ENCODE measurements at regions of chr19 and their contacts with region 1.

Region 1: GRCh38 chr19:49766007-49766937 is 529 bp upstream of the AP2A1 start:
- DNase-seq: peak; percentile 96 to 100
- ATAC-seq: peak; percentile 87 to 97 (median 87)
- H3K4me3 ChIP-seq: peak overlapping the region; percentile 50
- H3K4me3 Mint-ChIP-seq: peak overlapping the region; percentile 95
- H3K27ac ChIP-seq: peak overlapping the region; percentile 71
- H3K27ac Mint-ChIP-seq: peak overlapping the region; percentile 91 to 93
- H3K4me1 ChIP-seq: peaks cover 58% of the 10 kb centered on the region
- H3K4me1 Mint-ChIP-seq: peaks cover 45 to 55% of the 10 kb centered on the region in 2 donors
- H3K27me3 ChIP-seq: no peaks in the 10 kb centered on the region
- H3K27me3 Mint-ChIP-seq: no peaks in the 10 kb centered on the region
- CTCF ChIP-seq: no peak

Region 2: DNA sequence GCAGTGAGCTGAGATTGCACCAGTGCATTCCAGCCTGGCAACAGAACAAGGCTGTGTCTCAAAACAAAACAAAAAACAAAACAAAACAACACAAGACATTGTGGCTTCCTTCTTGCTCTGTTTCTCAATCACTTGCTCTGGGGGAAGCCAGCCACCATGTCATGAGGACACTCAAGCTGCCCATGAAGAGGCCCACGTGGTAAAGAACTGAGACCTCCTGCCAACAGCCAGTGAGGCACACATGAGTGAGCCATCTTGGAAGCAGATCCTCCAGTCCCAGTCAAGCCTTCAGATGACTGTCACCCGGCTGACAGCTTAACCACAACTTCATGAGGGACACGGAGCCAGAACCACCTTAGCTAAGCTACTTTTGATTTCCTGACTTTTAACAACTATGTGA is 50.1 kb before region 1 on chr19:
- intact Hi-C with region 1: loop called (anchors 2 kb)
- DNase-seq: no peak
- ATAC-seq: no peak
- H3K4me3 ChIP-seq: no peak overlapping the region
- H3K4me3 Mint-ChIP-seq: no peak overlapping the region
- H3K27ac ChIP-seq: no peak overlapping the region
- H3K27ac Mint-ChIP-seq: no peak overlapping the region
- H3K4me1 ChIP-seq: peaks cover 16% of the 10 kb centered on the region
- H3K4me1 Mint-ChIP-seq: peaks cover 8 to 13% of the 10 kb centered on the region in 2 donors
- H3K27me3 ChIP-seq: no peaks in the 10 kb centered on the region
- H3K27me3 Mint-ChIP-seq: peaks cover 0 to 4% of the 10 kb centered on the region in 2 donors
- CTCF ChIP-seq: no peak

Region 3: GRCh38 chr19:49786376-49786820 is 20.1 kb after region 1 on chr19:
- intact Hi-C with region 1: no loop called
- DNase-seq: no peak
- ATAC-seq: no peak
- H3K4me3 ChIP-seq: no peak overlapping the region
- H3K4me3 Mint-ChIP-seq: no peak overlapping the region
- H3K27ac ChIP-seq: no peak overlapping the region
- H3K27ac Mint-ChIP-seq: peak overlapping the region; percentile 21 to 77
- H3K4me1 ChIP-seq: peaks cover 4% of the 10 kb centered on the region
- H3K4me1 Mint-ChIP-seq: peaks cover 37 to 41% of the 10 kb centered on the region in 2 donors
- H3K27me3 ChIP-seq: no peaks in the 10 kb centered on the region
- H3K27me3 Mint-ChIP-seq: no peaks in the 10 kb centered on the region
- CTCF ChIP-seq: no peak

Region 4: GRCh38 chr19:49817964-49818648 is 51.8 kb after region 1 on chr19 and contains the start of gene MED25:
- intact Hi-C with region 1: loop called (anchors 2 kb)
- DNase-seq: peak; percentile 91 to 95
- ATAC-seq: peak; percentile 52 to 74 (median 62)
- H3K4me3 ChIP-seq: peak within 1 kb of the TSS; percentile 98
- H3K4me3 Mint-ChIP-seq: peak within 1 kb of the TSS; percentile 98
- H3K27ac ChIP-seq: peak within 1 kb of the TSS; percentile 99
- H3K27ac Mint-ChIP-seq: peak within 1 kb of the TSS; percentile 98
- H3K4me1 ChIP-seq: peaks cover 24% of the 10 kb centered on the region
- H3K4me1 Mint-ChIP-seq: peaks cover 21 to 38% of the 10 kb centered on the region in 2 donors
- H3K27me3 ChIP-seq: no peaks in the 10 kb centered on the region
- H3K27me3 Mint-ChIP-seq: no peaks in the 10 kb centered on the region
- CTCF ChIP-seq: peak; percentile 14
- total RNA-seq, gene MED25: 64.2 to 132 (median 69.5) TPM

Region 5: GRCh38 chr19:49850473-49851342 is 84.4 kb after region 1 on chr19 and contains the start of gene PTOV1:
- intact Hi-C with region 1: loop called (anchors 1 kb)
- DNase-seq: peak; percentile 92 to 95
- ATAC-seq: peak; percentile 90 to 96 (median 91)
- H3K4me3 ChIP-seq: peak within 1 kb of the TSS; percentile 77
- H3K4me3 Mint-ChIP-seq: peak within 1 kb of the TSS; percentile 93
- H3K27ac ChIP-seq: peak within 1 kb of the TSS; percentile 94
- H3K27ac Mint-ChIP-seq: peak within 1 kb of the TSS; percentile 86 to 95
- H3K4me1 ChIP-seq: peaks cover 31% of the 10 kb centered on the region
- H3K4me1 Mint-ChIP-seq: peaks cover 30 to 33% of the 10 kb centered on the region in 2 donors
- H3K27me3 ChIP-seq: no peaks in the 10 kb centered on the region
- H3K27me3 Mint-ChIP-seq: no peaks in the 10 kb centered on the region
- CTCF ChIP-seq: no peak
- total RNA-seq, gene PTOV1: 116 to 132 (median 128) TPM

Region 6: DNA sequence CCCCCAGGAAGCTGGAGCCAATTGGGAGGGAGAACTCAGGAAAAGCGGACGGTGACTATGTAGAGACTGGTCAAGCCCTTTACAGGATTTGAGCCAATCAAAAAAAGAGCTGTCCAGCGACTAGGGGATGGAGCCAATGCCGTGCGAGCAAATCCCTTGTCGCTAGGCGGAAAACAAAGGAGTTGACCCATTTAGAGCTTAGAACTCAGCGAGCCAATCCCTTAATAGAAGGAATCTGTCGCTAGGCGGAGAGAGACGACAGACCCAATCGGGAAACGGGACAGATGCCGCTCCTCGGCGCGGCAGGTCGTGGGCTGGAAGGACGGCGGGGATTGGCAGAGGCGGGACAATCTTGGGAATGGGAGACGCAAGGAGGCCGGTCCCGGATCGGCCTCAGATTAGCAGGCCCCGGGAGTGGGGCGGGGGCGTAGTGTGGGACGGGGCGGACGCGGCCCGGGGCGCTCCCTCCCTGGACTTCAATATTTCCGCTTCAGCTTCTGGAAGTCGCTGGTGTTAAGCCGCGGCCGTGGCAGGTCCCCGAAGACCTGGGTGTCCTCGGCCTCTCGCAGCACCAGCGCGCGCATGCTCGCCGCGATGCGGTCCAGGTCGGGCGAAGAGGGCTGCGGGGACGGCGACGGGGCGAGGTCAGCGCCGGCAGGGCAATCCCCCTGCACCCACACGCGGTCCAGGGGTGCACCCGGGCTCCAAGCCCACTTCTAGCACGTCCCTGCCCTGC is 103.3 kb after region 1 on chr19:
- intact Hi-C with region 1: loop called (anchors 5 kb)
- DNase-seq: peak; percentile 90 to 96
- ATAC-seq: peak; percentile 76 to 90 (median 81)
- H3K4me3 ChIP-seq: peak overlapping the region; percentile 68
- H3K4me3 Mint-ChIP-seq: no peak overlapping the region
- H3K27ac ChIP-seq: peak overlapping the region; percentile 88
- H3K27ac Mint-ChIP-seq: no peak overlapping the region
- H3K4me1 ChIP-seq: peaks cover 51% of the 10 kb centered on the region
- H3K4me1 Mint-ChIP-seq: peaks cover 18 to 20% of the 10 kb centered on the region in 2 donors
- H3K27me3 ChIP-seq: no peaks in the 10 kb centered on the region
- H3K27me3 Mint-ChIP-seq: no peaks in the 10 kb centered on the region
- CTCF ChIP-seq: no peak